ENCODE measurements at regions of chr12 and their contacts with region 1.

Region 1: GRCh38 chr12:130761537-130762318 is 45.6 kb upstream of the RIMBP2 start:
- DNase-seq: peak; percentile 47 to 72 (median 61)
- ATAC-seq: peak; percentile 94
- H3K4me3 ChIP-seq: no peak overlapping the region
- H3K27ac ChIP-seq: no peak overlapping the region
- H3K4me1 ChIP-seq: peaks cover 0 to 7% of the 10 kb centered on the region in 2 experiments; a peak in 1 of 5 replicates
- H3K27me3 ChIP-seq: peaks cover 10 to 34% of the 10 kb centered on the region in 2 experiments; a peak in 4 of 5 replicates
- CTCF ChIP-seq: peak; percentile 78 to 79 (median 78)
- EP300 ChIP-seq: no peak
- POLR2A ChIP-seq: no peak
- RAD21 ChIP-seq: peak; percentile 60 to 89

Region 2: DNA sequence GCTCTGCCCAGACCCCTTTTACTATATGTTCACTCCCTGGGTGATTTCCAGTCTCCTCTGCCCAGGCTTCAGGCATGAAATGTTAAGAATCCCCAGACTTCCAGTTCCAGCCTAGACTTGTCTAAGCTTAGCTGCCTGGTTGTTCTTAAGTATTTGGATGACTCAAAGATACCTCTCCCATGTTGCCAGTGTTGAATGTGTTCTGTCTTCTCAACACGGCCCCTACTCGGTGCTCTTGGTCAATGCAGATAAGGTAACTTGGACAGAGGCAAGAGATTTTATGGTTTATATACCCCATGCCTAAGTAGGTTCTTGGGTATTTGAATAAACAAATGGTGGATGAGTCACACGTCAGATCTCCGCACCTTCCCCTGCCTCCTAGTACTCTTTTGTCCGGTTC is 410.4 kb before region 1 on chr12:
- CTCF ChIA-PET with region 1: no interaction called
- POLR2A ChIA-PET with region 1: no interaction called
- in situ Hi-C with region 1: no loop called
- intact Hi-C with region 1: no loop called
- DNase-seq: no peak
- ATAC-seq: no peak
- H3K4me3 ChIP-seq: no peak overlapping the region
- H3K27ac ChIP-seq: no peak overlapping the region
- H3K4me1 ChIP-seq: no peaks in the 10 kb centered on the region
- H3K27me3 ChIP-seq: peaks cover 3 to 9% of the 10 kb centered on the region in 2 experiments; a peak in 4 of 5 replicates
- CTCF ChIP-seq: no peak
- EP300 ChIP-seq: no peak
- POLR2A ChIP-seq: no peak
- RAD21 ChIP-seq: no peak

Region 3: GRCh38 chr12:130650131-130650530 is 111.6 kb before region 1 on chr12:
- CTCF ChIA-PET with region 1: no interaction called
- POLR2A ChIA-PET with region 1: no interaction called
- in situ Hi-C with region 1: no loop called
- intact Hi-C with region 1: no loop called
- DNase-seq: no peak
- ATAC-seq: no peak
- H3K4me3 ChIP-seq: no peak overlapping the region
- H3K27ac ChIP-seq: no peak overlapping the region
- H3K4me1 ChIP-seq: peaks cover 0 to 5% of the 10 kb centered on the region in 2 experiments; a peak in 2 of 5 replicates
- H3K27me3 ChIP-seq: peaks cover 14 to 44% of the 10 kb centered on the region in 2 experiments; a peak in 3 of 5 replicates
- CTCF ChIP-seq: no peak
- EP300 ChIP-seq: no peak
- POLR2A ChIP-seq: no peak
- RAD21 ChIP-seq: no peak

Region 4: DNA sequence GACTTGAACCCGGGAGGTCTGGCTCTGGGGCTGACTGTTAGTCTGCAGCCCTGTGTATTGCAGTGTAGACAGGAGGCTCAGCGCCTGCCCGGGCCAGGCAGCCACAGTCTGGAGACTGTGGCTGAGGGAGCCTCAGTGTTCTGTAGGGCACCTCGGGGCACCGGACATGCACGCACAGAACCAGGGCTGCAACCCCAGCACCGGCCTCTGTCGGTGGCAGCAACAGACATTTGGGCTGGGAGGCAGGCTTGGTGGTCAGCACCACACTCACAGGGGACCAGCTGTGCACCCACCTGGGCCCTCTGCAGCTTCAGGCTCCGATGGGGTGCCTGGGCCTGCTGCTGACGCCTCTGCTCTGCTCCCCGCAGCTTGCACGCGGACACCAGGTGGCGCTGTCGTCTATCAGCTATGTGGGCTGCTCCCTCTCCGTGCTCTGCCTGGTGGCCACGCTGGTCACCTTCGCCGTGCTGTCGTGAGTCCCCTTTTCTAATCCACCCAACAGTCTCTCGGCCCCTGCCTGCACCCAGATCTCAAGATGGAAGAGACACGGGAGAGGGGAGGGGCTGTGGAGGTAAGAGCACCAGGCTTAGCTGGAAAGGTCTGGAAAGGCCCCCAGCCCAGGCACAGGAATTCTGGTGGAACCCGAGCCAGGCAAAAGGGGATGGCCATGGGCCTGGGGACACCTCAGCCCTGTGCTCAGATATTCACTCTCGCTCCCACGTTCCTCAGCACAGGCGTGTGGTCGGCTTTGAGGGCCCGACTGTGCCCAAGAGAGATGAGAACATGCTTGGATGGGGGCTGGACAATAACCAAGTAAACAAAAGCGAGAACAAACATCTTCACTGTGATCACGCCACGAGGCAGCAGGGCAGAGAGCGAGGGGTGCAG is 343.0 kb after region 1 on chr12:
- CTCF ChIA-PET with region 1: no interaction called
- POLR2A ChIA-PET with region 1: no interaction called
- in situ Hi-C with region 1: no loop called
- intact Hi-C with region 1: loop called (anchors 10 kb)
- DNase-seq: peak; percentile 82 to 89 (median 84)
- ATAC-seq: peak; percentile 100
- H3K4me3 ChIP-seq: no peak overlapping the region
- H3K27ac ChIP-seq: no peak overlapping the region
- H3K4me1 ChIP-seq: peaks cover 0 to 27% of the 10 kb centered on the region in 2 experiments; a peak in 2 of 5 replicates
- H3K27me3 ChIP-seq: peaks cover 0 to 7% of the 10 kb centered on the region in 2 experiments; a peak in 1 of 5 replicates
- CTCF ChIP-seq: peak; percentile 94 to 98 (median 96)
- EP300 ChIP-seq: no peak
- POLR2A ChIP-seq: no peak
- RAD21 ChIP-seq: peak; percentile 92 to 93

Region 5: DNA sequence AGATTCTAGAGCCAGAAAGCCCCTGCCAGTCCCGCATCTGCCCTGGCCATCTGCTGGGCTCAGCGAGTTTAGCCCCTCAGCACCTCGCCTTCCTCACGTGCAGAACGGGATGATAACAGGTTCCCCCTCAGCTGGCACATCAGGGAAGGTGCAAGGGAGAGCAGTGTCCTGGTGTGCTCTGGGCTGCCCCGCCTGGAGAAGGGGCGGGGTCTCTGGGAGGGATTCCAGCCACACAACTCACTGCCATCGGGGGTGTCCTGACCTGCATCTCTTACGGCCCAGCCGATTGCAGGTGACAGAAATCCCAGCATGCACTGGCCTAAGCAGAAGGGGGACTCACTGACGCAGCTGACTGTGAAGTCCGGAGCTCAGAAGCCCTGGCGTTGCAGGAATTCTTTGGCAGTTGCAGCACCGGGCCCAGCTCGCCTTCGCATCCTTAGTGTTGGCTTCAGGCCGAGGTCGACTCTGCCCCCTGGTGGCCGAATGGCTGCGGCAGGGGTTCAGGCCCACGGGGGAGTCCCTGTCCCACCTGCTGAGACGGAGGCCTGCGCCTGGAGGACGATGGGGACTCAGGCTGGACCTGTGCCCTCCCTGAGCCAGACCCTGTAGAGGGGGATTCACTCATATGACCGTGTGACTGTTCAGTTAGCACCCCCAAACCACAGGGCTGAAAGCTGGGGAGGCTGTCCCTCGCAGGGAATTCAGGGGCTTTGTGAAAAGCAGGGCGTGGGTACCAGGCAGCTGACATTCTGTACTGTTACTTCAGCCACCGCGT is 370.6 kb after region 1 on chr12:
- CTCF ChIA-PET with region 1: interaction called, 3 read pairs
- POLR2A ChIA-PET with region 1: no interaction called
- in situ Hi-C with region 1: no loop called
- intact Hi-C with region 1: loop called (anchors 1 kb)
- DNase-seq: peak; percentile 75 to 84 (median 82)
- ATAC-seq: peak; percentile 97
- H3K4me3 ChIP-seq: no peak overlapping the region
- H3K27ac ChIP-seq: no peak overlapping the region
- H3K4me1 ChIP-seq: peaks cover 0 to 18% of the 10 kb centered on the region in 2 experiments; a peak in 3 of 5 replicates
- H3K27me3 ChIP-seq: peaks cover 0 to 31% of the 10 kb centered on the region in 2 experiments; a peak in 3 of 5 replicates
- CTCF ChIP-seq: peak; percentile 78 to 90 (median 80)
- EP300 ChIP-seq: no peak
- POLR2A ChIP-seq: no peak
- RAD21 ChIP-seq: peak; percentile 74 to 82